A549 (cell line): ENCODE measurements at regions of chr14 and their contacts with region 1.

Region 1: GRCh38 chr14:75982266-75983018 is 647 bp upstream of the TGFB3 start:
- DNase-seq: peak; percentile 73 to 74
- ATAC-seq: peak; percentile 75 to 88
- H3K4me3 ChIP-seq: peak overlapping the region; percentile 74
- H3K27ac ChIP-seq: peak overlapping the region; percentile 66 to 83
- H3K4me1 ChIP-seq: peaks cover 22% of the 10 kb centered on the region; the same call in 2 of the 3 replicates
- CTCF ChIP-seq: peak; percentile 68
- EP300 ChIP-seq: no peak
- POLR2A ChIP-seq: no peak
- RAD21 ChIP-seq: peak; percentile 79 to 93

Region 2: GRCh38 chr14:75522224-75522982 is 460.0 kb before region 1 on chr14 and contains the start of gene BATF:
- CTCF ChIA-PET with region 1: no interaction called
- POLR2A ChIA-PET with region 1: no interaction called
- DNase-seq: no peak
- ATAC-seq: no peak
- H3K4me3 ChIP-seq: no peak within 1 kb of the TSS
- H3K27ac ChIP-seq: peak within 1 kb of the TSS; percentile 30 to 57; a peak in 4 of 6 replicates
- H3K4me1 ChIP-seq: peaks cover 23% of the 10 kb centered on the region
- CTCF ChIP-seq: no peak
- EP300 ChIP-seq: no peak
- POLR2A ChIP-seq: no peak
- RAD21 ChIP-seq: no peak
- polyA plus RNA-seq, gene BATF: not detected in 2 replicates

Region 3: GRCh38 chr14:75702616-75703261 is 279.7 kb before region 1 on chr14:
- CTCF ChIA-PET with region 1: interaction called, 448 read pairs
- POLR2A ChIA-PET with region 1: interaction called, 11 read pairs
- DNase-seq: no peak
- ATAC-seq: no peak
- H3K4me3 ChIP-seq: no peak overlapping the region
- H3K27ac ChIP-seq: no peak overlapping the region
- H3K4me1 ChIP-seq: no peaks in the 10 kb centered on the region
- CTCF ChIP-seq: no peak
- EP300 ChIP-seq: no peak
- POLR2A ChIP-seq: no peak
- RAD21 ChIP-seq: no peak

Region 4: GRCh38 chr14:75794615-75795038 is 187.8 kb before region 1 on chr14:
- CTCF ChIA-PET with region 1: interaction called, 11 read pairs
- POLR2A ChIA-PET with region 1: no interaction called
- DNase-seq: peak in 1 of 2 experiments; percentile 9
- ATAC-seq: peak; percentile 71 to 77; a peak in 4 of 6 replicates
- H3K4me3 ChIP-seq: no peak overlapping the region
- H3K27ac ChIP-seq: no peak overlapping the region
- H3K4me1 ChIP-seq: no peaks in the 10 kb centered on the region
- CTCF ChIP-seq: peak; percentile 15; the same call in 2 of the 3 replicates
- EP300 ChIP-seq: no peak
- POLR2A ChIP-seq: no peak
- RAD21 ChIP-seq: peak; percentile 24 to 28; a peak in 2 of 5 replicates

Region 5: GRCh38 chr14:75968456-75968855 is 14.0 kb before region 1 on chr14:
- CTCF ChIA-PET with region 1: interaction called, 34 read pairs
- POLR2A ChIA-PET with region 1: no interaction called
- DNase-seq: no peak
- ATAC-seq: no peak
- H3K4me3 ChIP-seq: no peak overlapping the region
- H3K27ac ChIP-seq: no peak overlapping the region
- H3K4me1 ChIP-seq: no peaks in the 10 kb centered on the region
- CTCF ChIP-seq: no peak
- EP300 ChIP-seq: no peak
- POLR2A ChIP-seq: no peak
- RAD21 ChIP-seq: no peak